ENCODE measurements at regions of chr16 and their contacts with region 1.

Region 1: GRCh38 chr16:13848795-13849194 is 71.2 kb upstream of the ERCC4 start:
- DNase-seq: no peak
- H3K4me3 ChIP-seq: no peak overlapping the region
- H3K27ac ChIP-seq: no peak overlapping the region
- H3K4me1 ChIP-seq: no peaks in the 10 kb centered on the region
- H3K27me3 ChIP-seq: no peaks in the 10 kb centered on the region
- CTCF ChIP-seq: no peak

Region 2: GRCh38 chr16:13680021-13680889 is 168.5 kb before region 1 on chr16:
- CTCF ChIA-PET with region 1: no interaction called
- dilution Hi-C with region 1: no loop called
- in situ Hi-C with region 1: no loop called
- intact Hi-C with region 1: no loop called
- DNase-seq: no peak
- H3K4me3 ChIP-seq: no peak overlapping the region
- H3K27ac ChIP-seq: no peak overlapping the region
- H3K4me1 ChIP-seq: no peaks in the 10 kb centered on the region
- H3K27me3 ChIP-seq: no peaks in the 10 kb centered on the region
- CTCF ChIP-seq: no peak

Region 3: DNA sequence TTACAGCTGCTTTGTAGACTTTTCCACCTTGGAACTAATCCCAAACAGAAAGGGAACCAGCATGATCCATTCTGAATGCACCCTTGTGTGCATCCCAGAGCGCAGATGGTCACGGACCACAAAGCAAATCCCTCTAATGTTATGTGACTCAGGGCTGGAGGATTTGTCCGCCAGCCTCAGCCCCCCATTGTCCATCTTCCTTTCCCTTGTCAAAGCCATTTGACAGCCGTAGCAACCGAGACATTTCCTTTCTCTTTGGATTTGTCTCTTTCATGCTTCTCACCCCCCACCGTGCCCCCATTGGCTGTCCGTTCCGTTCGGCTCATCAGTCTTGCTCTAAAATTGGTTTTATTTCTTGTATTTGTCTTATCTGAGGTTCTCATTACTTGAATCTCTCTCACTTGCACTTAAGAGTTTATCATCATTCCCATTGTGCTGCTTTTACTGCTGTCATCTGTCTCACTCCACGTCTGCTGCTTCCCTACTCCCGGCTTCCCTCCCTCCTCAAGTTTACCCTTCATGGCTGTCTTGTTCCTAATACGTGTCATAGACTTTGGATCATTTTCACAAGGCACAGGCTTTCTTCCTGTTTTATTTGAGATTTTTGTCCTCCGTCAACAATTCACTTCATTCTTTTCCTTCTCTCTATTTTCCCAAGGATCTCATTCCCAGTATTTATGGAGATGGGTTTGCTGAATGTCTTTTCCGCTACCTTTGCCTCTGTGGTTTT is 92.2 kb before region 1 on chr16:
- CTCF ChIA-PET with region 1: no interaction called
- dilution Hi-C with region 1: loop called (anchors 5 kb)
- in situ Hi-C with region 1: no loop called
- intact Hi-C with region 1: no loop called
- DNase-seq: no peak
- H3K4me3 ChIP-seq: no peak overlapping the region
- H3K27ac ChIP-seq: no peak overlapping the region
- H3K4me1 ChIP-seq: no peaks in the 10 kb centered on the region
- H3K27me3 ChIP-seq: no peaks in the 10 kb centered on the region
- CTCF ChIP-seq: no peak

Region 4: DNA sequence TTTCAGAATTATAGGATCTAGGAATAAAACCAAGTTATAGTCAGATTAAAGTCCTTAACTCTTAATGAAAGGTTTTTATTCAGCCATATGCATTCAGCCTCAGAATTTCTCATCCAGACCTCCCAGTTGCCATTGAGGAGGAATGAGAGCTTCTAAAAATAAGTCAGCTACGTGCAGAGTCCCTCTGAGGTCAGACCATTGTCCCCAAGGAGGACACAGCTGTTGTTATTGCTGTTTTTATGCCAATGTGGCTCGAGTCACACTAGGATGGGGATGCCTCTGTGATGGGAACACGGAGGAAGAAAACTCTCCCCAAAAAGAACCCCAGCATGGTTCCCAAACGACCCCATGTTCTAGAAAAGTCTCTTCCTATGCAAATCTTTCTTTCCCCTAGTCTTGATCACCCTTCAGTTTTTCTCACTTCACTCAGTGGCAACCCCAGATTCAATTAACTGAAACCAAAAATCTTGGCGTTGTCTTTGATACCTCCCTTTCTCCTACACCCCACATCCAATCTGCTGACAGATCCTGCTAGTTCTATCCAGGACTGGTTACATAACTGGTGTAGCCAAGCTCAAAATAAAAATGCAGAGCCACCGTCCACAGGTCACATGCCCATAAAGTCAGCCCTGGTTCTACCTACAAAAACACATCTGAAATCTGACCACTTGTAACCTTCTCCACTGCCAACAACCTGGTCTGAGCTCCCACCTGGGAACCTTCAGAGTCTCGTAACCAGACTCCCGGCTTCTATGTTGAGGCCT is 67.0 kb before region 1 on chr16:
- CTCF ChIA-PET with region 1: no interaction called
- dilution Hi-C with region 1: no loop called
- in situ Hi-C with region 1: no loop called
- intact Hi-C with region 1: no loop called
- DNase-seq: no peak
- H3K4me3 ChIP-seq: no peak overlapping the region
- H3K27ac ChIP-seq: no peak overlapping the region
- H3K4me1 ChIP-seq: no peaks in the 10 kb centered on the region
- H3K27me3 ChIP-seq: no peaks in the 10 kb centered on the region
- CTCF ChIP-seq: no peak

Measured in mammary epithelial cell (primary cell).